SK-N-SH (cell line): ENCODE measurements at regions of chr11 and their contacts with region 1.

Region 1: DNA sequence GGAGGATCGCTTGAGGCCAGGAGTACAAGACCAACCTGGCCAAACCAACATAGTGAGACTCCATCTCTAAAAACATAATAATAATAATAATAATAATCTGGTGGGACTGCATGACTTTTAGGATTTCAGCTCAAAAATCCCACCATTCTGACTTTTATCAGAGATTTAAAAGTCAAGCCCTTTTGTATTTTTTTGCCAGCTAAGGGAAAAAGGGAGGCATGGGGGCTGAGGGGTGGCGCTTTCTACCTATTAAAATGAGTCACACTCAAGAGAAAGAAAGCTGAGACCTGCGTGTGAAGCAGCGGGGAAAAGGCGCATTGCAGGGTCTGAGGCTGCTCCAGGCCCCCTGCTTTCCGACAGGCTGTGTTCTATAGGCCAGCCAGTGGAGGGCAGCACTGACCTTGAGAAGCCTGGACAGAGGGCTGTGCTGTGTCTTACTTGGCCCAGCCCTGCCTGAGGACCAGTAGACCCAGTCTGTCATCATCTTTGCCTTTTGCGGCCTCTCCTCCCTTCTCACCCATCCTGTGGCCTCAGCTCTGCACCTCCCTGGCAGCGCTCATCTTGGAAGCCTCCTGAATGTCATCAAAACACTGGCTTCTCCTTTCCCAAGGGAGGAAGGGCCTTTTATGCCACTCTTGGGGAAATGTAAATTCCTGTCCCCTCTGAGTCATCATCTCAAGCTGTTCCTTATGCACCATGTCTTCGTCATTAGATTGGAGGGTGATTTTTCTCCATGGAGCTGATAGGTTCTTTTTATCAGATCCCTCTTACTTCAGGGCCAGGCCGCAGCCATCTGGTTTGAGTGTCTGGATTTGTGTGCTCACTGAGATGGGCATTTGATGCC is 12.7 kb upstream of the MAPK8IP1 start:
- DNase-seq: peak; percentile 88
- H3K4me3 ChIP-seq: peak overlapping the region in 1 of 2 experiments; percentile 41; a peak in 1 of 4 replicates
- H3K27ac ChIP-seq: peak overlapping the region; percentile 70 to 83
- H3K4me1 ChIP-seq: peaks cover 9 to 17% of the 10 kb centered on the region in 2 experiments; a peak in 3 of 4 replicates
- H3K27me3 ChIP-seq: no peaks in the 10 kb centered on the region
- CTCF ChIP-seq: peak; percentile 90
- EP300 ChIP-seq: peak in 1 of 2 experiments; percentile 61; a peak in 1 of 4 replicates
- RAD21 ChIP-seq: peak; percentile 93

Region 2: GRCh38 chr11:45676522-45677095 is 196.1 kb before region 1 on chr11:
- CTCF ChIA-PET with region 1: no interaction called
- POLR2A ChIA-PET with region 1: no interaction called
- DNase-seq: no peak
- H3K4me3 ChIP-seq: no peak overlapping the region
- H3K27ac ChIP-seq: no peak overlapping the region
- H3K4me1 ChIP-seq: peaks cover 0 to 2% of the 10 kb centered on the region in 2 experiments; a peak in 1 of 4 replicates
- H3K27me3 ChIP-seq: peaks cover 6% of the 10 kb centered on the region; the same call in 1 of the 2 replicates
- CTCF ChIP-seq: no peak
- EP300 ChIP-seq: no peak
- RAD21 ChIP-seq: no peak

Region 3: DNA sequence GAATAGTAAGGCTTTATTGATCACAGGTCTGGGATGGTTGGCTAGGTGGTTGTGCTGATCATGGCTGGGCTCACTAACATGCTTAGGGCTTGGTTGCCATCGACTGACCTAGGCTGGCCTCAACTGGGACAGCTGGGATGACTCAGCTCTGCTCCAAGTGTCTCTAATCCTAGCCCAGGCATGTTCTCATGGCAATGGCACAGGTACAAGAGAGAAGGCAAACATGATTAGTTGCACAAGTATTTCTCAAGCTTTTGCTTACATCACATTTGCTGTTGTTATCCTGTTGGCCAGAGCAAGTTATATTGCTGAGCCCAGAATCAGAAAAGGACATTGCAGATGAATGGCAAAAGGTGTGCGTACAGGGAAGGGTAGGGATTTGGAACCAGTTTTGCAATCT is 136.3 kb before region 1 on chr11:
- CTCF ChIA-PET with region 1: no interaction called
- POLR2A ChIA-PET with region 1: no interaction called
- DNase-seq: no peak
- H3K4me3 ChIP-seq: no peak overlapping the region
- H3K27ac ChIP-seq: no peak overlapping the region
- H3K4me1 ChIP-seq: no peaks in the 10 kb centered on the region
- H3K27me3 ChIP-seq: no peaks in the 10 kb centered on the region
- CTCF ChIP-seq: no peak
- EP300 ChIP-seq: no peak
- RAD21 ChIP-seq: no peak

Region 4: DNA sequence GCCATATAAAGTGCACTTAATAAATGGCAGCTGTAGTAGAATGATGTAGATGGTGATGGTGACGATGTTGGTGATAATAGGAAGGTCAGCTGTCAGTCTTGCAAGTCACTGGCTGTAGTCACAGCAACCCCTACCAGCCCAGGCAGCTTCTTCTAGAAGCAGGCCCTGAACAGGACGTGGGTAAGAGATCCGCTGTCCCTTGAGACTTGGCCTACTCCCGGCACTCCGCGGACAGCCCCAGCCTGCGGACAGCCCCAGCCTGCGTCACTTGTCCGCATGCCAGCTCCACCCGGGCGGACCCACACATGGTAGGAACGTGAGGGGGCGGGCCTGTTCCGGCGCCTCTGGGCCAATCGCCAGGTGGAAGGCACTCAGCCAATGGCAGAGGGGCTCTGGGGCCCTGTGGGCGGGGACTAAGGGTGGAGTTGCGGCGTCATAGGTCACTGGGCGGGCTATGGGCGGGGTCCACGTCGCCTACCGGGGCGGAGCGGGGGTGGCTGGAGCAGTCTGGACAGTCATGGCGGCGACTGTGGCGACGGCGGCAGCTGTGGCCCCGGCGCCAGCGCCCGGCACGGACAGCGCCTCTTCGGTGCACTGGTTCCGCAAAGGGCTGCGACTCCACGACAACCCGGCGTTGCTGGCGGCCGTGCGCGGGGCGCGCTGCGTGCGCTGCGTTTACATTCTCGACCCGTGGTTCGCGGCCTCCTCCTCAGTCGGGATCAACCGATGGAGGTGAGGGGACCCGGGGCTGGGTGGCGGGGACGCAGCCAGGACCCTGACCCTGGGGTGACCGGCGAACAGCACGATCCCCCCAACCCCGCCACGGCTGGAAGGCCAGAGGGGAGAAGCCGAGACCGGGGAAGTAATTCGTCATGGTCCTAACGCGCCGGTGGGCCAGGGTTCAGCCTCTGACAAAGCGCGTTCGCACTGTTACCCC is 25.5 kb before region 1 on chr11 and contains the start of gene CRY2:
- CTCF ChIA-PET with region 1: interaction called, 25 read pairs
- POLR2A ChIA-PET with region 1: no interaction called
- DNase-seq: peak; percentile 99
- H3K4me3 ChIP-seq: peak within 1 kb of the TSS; percentile 92 to 97
- H3K27ac ChIP-seq: peak within 1 kb of the TSS; percentile 23 to 86
- H3K4me1 ChIP-seq: peaks cover 11 to 19% of the 10 kb centered on the region in 2 experiments
- H3K27me3 ChIP-seq: no peaks in the 10 kb centered on the region
- CTCF ChIP-seq: no peak
- EP300 ChIP-seq: no peak; a peak in 1 of 4 replicates
- RAD21 ChIP-seq: no peak
- polyA plus RNA-seq, gene CRY2: 6.7 and 9.1 TPM in 2 replicates

Region 5: GRCh38 chr11:45859661-45860140 is 13.0 kb before region 1 on chr11:
- CTCF ChIA-PET with region 1: interaction called, 118 read pairs
- POLR2A ChIA-PET with region 1: no interaction called
- DNase-seq: peak; percentile 87
- H3K4me3 ChIP-seq: no peak overlapping the region
- H3K27ac ChIP-seq: peak overlapping the region; percentile 87 to 95
- H3K4me1 ChIP-seq: peaks cover 36 to 52% of the 10 kb centered on the region in 2 experiments
- H3K27me3 ChIP-seq: no peaks in the 10 kb centered on the region
- CTCF ChIP-seq: no peak
- EP300 ChIP-seq: peak; percentile 58 to 65; a peak in 3 of 4 replicates
- RAD21 ChIP-seq: peak; percentile 33; the same call in 1 of the 2 replicates

Region 6: DNA sequence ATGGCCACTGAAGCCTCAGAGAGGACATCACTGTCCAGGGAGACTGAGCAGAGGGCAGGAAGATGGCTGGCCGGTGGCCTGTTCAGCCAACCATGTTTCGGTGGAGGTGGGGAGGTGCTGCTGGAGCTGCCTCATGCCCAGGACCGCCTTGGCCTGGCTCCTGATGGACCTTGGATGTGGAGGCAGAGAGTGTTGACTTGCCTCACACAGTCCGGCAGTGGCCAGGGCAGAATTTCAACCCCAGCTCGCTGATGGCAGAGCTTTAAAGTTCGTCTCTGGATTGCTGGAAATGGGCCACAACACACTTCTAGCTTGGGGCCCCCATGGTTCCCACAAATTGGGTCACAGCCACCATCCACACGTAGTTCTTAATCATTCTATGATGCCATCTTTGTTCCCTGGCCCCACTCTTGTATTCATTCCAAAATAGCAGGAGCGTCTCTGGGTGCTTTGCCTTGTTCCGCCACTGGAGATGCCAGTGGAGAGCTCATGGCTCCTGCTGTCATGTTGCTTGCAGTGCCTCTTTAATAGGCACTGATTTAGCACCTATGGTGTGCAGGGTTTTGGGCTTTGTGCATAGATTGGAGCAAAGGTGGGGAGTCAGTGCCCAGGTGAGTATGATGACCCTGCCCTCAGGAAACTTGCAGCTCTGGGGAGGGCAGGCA is 18.3 kb after region 1 on chr11:
- CTCF ChIA-PET with region 1: interaction called, 31 read pairs
- POLR2A ChIA-PET with region 1: no interaction called
- DNase-seq: peak; percentile 12
- H3K4me3 ChIP-seq: no peak overlapping the region
- H3K27ac ChIP-seq: no peak overlapping the region
- H3K4me1 ChIP-seq: peaks cover 0 to 22% of the 10 kb centered on the region in 2 experiments; a peak in 1 of 4 replicates
- H3K27me3 ChIP-seq: no peaks in the 10 kb centered on the region
- CTCF ChIP-seq: no peak
- EP300 ChIP-seq: no peak
- RAD21 ChIP-seq: no peak

Region 7: DNA sequence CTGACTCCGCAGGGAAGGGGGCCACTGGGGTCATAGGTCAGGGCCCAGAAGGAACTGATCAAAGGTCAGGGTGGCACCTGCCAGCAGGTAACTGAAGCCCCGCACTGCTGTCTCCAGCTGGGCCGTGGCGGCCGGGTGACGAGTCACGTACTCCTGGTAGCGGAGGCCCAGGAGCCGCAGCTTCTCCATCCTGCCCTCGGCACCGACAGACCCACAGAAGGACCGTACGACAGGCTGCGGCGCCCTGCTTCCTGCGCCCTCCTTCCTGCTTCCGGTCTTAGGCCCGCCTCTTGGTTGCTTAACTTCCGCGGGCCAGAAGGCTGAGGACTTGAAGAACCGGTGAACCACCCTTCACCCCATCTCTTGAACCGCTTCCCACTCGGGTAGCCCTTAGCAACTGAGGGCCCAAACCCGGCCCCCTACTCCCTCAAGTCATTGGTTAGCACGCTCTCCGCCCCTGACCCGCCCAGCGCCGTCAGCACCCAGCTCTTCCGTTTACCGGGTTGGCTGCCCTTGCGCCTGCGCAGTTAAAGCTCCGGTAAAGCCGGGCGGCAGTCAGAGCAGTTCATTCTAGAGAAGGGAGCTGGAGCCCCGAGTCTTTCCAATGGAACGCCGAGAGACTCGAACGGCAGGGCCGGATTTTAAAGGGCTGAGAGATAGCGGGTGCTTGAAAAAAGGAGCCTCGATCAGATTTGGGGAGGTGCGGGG is 45.0 kb after region 1 on chr11 and contains the start of gene PEX16:
- CTCF ChIA-PET with region 1: interaction called, 35 read pairs
- POLR2A ChIA-PET with region 1: interaction called, 3 read pairs
- DNase-seq: peak; percentile 97
- H3K4me3 ChIP-seq: peak within 1 kb of the TSS; percentile 95 to 99
- H3K27ac ChIP-seq: peak within 1 kb of the TSS; percentile 83 to 89
- H3K4me1 ChIP-seq: peaks cover 7 to 17% of the 10 kb centered on the region in 2 experiments; a peak in 3 of 4 replicates
- H3K27me3 ChIP-seq: no peaks in the 10 kb centered on the region
- CTCF ChIP-seq: no peak
- EP300 ChIP-seq: no peak
- RAD21 ChIP-seq: no peak
- polyA plus RNA-seq, gene PEX16: 44.1 and 46.4 TPM in 2 replicates

Region 8: GRCh38 chr11:45964911-45965389 is 92.2 kb after region 1 on chr11:
- CTCF ChIA-PET with region 1: interaction called, 35 read pairs
- POLR2A ChIA-PET with region 1: no interaction called
- DNase-seq: peak; percentile 81
- H3K4me3 ChIP-seq: no peak overlapping the region; a peak in 1 of 4 replicates
- H3K27ac ChIP-seq: peak overlapping the region in 1 of 2 experiments; percentile 2; a peak in 1 of 4 replicates
- H3K4me1 ChIP-seq: no peaks in the 10 kb centered on the region; a peak in 1 of 4 replicates
- H3K27me3 ChIP-seq: no peaks in the 10 kb centered on the region
- CTCF ChIP-seq: peak; percentile 96
- EP300 ChIP-seq: no peak
- RAD21 ChIP-seq: peak; percentile 91

Region 9: GRCh38 chr11:46006418-46007070 is 133.8 kb after region 1 on chr11:
- CTCF ChIA-PET with region 1: interaction called, 36 read pairs
- POLR2A ChIA-PET with region 1: no interaction called
- DNase-seq: peak; percentile 65
- H3K4me3 ChIP-seq: no peak overlapping the region; a peak in 1 of 4 replicates
- H3K27ac ChIP-seq: no peak overlapping the region
- H3K4me1 ChIP-seq: peaks cover 0 to 27% of the 10 kb centered on the region in 2 experiments; a peak in 2 of 4 replicates
- H3K27me3 ChIP-seq: no peaks in the 10 kb centered on the region
- CTCF ChIP-seq: peak; percentile 86
- EP300 ChIP-seq: no peak
- RAD21 ChIP-seq: peak; percentile 94